ENCODE measurements at regions of chr20 and their contacts with region 1.

Region 1: GRCh38 chr20:37095599-37096414 is at the start of gene RBL1:
- DNase-seq: peak; percentile 89
- H3K4me3 Mint-ChIP-seq: peak within 1 kb of the TSS; percentile 95
- H3K27ac Mint-ChIP-seq: peak within 1 kb of the TSS; percentile 99
- H3K4me1 Mint-ChIP-seq: peaks cover 48% of the 10 kb centered on the region
- H3K27me3 Mint-ChIP-seq: peaks cover 2% of the 10 kb centered on the region
- total RNA-seq, gene RBL1: 45.2 to 45.6 TPM

Region 2: GRCh38 chr20:36835453-36836198 is 260.2 kb before region 1 on chr20:
- CTCF ChIA-PET with region 1: no interaction called
- POLR2A ChIA-PET with region 1: interaction called, 20 read pairs
- DNase-seq: peak; percentile 92
- H3K4me3 Mint-ChIP-seq: peak overlapping the region; percentile 82
- H3K27ac Mint-ChIP-seq: peak overlapping the region; percentile 87
- H3K4me1 Mint-ChIP-seq: peaks cover 27% of the 10 kb centered on the region
- H3K27me3 Mint-ChIP-seq: no peaks in the 10 kb centered on the region

Region 3: DNA sequence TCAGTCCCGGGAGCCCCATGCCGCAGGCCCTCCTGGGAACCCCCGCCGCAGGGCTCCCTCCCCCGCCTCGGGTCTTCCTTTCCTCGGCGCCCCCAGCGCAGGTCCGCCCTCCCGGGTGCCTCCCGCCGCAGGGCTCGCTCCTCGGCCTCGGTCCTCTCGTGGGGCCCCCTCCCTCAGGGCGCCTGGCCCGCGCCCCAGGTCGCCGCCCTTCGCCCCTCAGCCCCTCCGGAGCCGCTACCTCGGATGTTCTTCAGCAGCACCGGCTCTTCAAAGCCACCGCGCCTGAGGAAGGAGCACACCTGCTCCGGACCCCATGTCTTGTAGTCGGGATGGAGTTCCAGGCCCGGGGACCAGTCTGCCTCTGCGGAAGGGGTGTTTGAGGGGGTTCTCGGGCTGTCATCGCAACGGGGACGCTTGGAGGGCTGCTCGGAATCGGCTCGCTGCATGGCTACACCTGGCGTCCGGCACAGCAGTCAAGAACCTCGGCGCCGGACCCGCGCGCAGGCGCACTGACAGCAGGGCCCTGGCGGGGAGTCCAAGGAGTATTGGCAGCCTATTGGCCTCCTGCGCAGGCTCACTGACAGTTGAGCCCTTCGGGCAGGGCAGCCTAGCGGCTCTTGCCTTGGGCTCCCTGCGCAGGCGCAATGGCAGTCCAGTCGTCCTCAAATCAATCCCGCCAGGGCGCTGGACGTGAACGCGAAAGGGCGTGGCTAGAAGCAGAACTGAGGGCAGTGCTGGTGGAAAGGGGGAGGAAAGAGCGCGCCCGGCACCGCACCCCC is 144.4 kb before region 1 on chr20 and contains the start of gene SAMHD1:
- CTCF ChIA-PET with region 1: no interaction called
- POLR2A ChIA-PET with region 1: interaction called, 13 read pairs
- DNase-seq: peak; percentile 93
- H3K4me3 Mint-ChIP-seq: peak within 1 kb of the TSS; percentile 92
- H3K27ac Mint-ChIP-seq: peak within 1 kb of the TSS; percentile 97
- H3K4me1 Mint-ChIP-seq: peaks cover 39% of the 10 kb centered on the region
- H3K27me3 Mint-ChIP-seq: no peaks in the 10 kb centered on the region
- total RNA-seq, gene SAMHD1: 272 TPM

Region 4: GRCh38 chr20:37071481-37071911 is 24.3 kb before region 1 on chr20:
- CTCF ChIA-PET with region 1: interaction called, 3 read pairs
- POLR2A ChIA-PET with region 1: interaction called, 21 read pairs
- DNase-seq: peak; percentile 54
- H3K4me3 Mint-ChIP-seq: no peak overlapping the region
- H3K27ac Mint-ChIP-seq: peak overlapping the region; percentile 91
- H3K4me1 Mint-ChIP-seq: peaks cover 47% of the 10 kb centered on the region
- H3K27me3 Mint-ChIP-seq: no peaks in the 10 kb centered on the region

Region 5: GRCh38 chr20:37152284-37152683 is 56.5 kb after region 1 on chr20:
- CTCF ChIA-PET with region 1: no interaction called
- POLR2A ChIA-PET with region 1: no interaction called
- DNase-seq: no peak
- H3K4me3 Mint-ChIP-seq: no peak overlapping the region
- H3K27ac Mint-ChIP-seq: no peak overlapping the region
- H3K4me1 Mint-ChIP-seq: no peaks in the 10 kb centered on the region
- H3K27me3 Mint-ChIP-seq: no peaks in the 10 kb centered on the region

Region 6: DNA sequence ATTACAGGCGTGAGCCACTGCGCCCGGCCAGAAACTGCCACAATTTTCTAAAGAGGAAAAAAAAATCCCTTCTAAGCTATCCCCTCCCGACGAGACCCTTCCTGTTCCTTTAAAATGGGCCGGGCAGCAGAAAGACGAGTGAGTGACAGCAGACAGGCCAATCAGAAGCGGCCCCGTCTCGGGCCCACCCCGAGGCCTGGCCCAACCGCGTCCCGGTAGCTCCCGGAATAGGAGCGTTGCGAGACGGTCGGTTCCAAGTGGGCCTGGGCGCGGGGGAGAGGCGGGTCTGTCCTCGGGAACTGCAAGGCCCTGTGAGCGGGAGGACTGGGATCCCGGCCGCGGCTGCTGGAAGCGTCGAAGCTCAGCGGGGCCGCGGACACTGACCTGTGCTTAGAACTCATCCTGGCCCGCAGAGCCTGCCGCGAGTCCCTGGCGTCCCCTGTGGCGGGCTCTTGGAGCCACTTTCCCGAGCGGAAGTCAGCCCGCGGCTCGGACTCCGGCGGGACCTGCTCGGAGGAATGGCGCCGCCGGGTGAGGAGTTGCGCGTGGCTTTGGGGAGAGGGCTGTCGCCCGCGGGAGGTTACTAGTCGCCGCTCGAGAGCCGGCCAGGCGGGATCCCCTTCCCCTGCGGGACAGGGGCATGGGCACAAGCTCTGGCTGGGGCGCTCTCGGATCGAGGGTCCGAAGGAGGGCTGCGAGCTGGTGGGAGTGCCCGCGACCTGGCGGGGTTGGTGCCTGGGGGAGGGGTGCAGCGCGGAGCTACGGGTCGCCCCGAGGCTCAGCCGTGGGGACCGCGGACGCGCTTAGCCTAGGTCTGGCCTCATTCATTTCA is 83.2 kb after region 1 on chr20 and contains the starts of genes MROH8 and RPN2:
- CTCF ChIA-PET with region 1: interaction called, 20 read pairs
- POLR2A ChIA-PET with region 1: interaction called, 106 read pairs
- DNase-seq: peak; percentile 97
- H3K4me3 Mint-ChIP-seq: peak within 1 kb of the TSS; percentile 92
- H3K27ac Mint-ChIP-seq: peak within 1 kb of the TSS; percentile 94
- H3K4me1 Mint-ChIP-seq: peaks cover 37% of the 10 kb centered on the region
- H3K27me3 Mint-ChIP-seq: no peaks in the 10 kb centered on the region
- total RNA-seq, gene MROH8: 1.7 to 2.2 TPM
- total RNA-seq, gene RPN2: 168 to 179 TPM